ENCODE measurements at regions of chr22 and their contacts with region 1.

Region 1: DNA sequence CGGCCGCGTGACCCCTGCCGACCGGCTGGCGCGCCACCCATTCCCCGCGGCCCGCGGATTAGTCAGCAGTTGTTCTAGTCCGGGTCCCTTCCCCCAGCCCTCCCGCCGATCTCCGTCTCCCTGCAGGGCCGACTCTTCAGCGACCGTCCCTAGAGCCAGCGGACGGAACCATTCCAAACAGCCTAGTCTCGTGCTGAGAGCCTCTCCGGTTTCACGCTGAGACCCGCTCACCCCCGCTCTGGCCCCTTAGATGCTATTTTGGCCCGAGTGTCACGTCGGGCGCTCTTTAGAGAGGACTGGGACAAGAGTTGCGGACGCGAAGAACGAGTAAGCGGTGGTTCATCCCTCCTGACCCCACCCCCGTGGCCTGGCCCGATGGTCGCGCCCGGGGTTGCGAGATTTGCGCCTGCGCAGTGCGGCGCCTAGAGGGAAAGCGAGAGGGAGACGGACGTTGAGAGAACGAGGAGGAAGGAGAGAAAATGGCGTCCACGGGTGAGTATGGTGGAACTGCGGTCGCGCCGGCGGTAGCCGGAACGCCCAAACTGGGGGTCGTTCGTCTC is at the starts of genes EWSR1 and RHBDD3:
- DNase-seq: peak; percentile 85 to 96 (median 95)
- H3K4me3 ChIP-seq: peak within 1 kb of the TSS; percentile 65 to 100 (median 95)
- H3K27ac ChIP-seq: peak within 1 kb of the TSS; percentile 85 to 100 (median 99)
- H3K27me3 ChIP-seq: no peaks in the 10 kb centered on the region
- CTCF ChIP-seq: peak in 16 of 56 donors; percentile 3 to 41 (median 16)
- total RNA-seq, gene EWSR1: 167 to 257 (median 211) TPM
- total RNA-seq, gene RHBDD3: 20.6 to 54.7 (median 29.2) TPM

Region 2: GRCh38 chr22:27919222-27919941 is 1348.6 kb before region 1 on chr22 and contains the start of gene PITPNB:
- intact Hi-C with region 1: loop called in 1 of 2 experiments (anchors 10 kb)
- DNase-seq: peak; percentile 84 to 96 (median 93)
- H3K4me3 ChIP-seq: peak within 1 kb of the TSS; percentile 63 to 100 (median 93)
- H3K27ac ChIP-seq: peak within 1 kb of the TSS; percentile 49 to 96 (median 90)
- H3K27me3 ChIP-seq: no peaks in the 10 kb centered on the region
- CTCF ChIP-seq: peak in 16 of 56 donors; percentile 9 to 47 (median 20)
- total RNA-seq, gene PITPNB: 55.3 to 116 (median 83.1) TPM

Region 3: GRCh38 chr22:29306175-29306834 is 38.4 kb after region 1 on chr22 and contains the start of gene GAS2L1:
- intact Hi-C with region 1: loop called (anchors 5 kb)
- DNase-seq: peak in 9 of 10 donors; percentile 62 to 89 (median 81)
- H3K4me3 ChIP-seq: peak within 1 kb of the TSS; percentile 56 to 93 (median 82)
- H3K27ac ChIP-seq: peak within 1 kb of the TSS; percentile 15 to 96 (median 86)
- H3K27me3 ChIP-seq: no peaks in the 10 kb centered on the region
- CTCF ChIP-seq: peak; percentile 31 to 81 (median 68)
- total RNA-seq, gene GAS2L1: 33.5 to 139 (median 57.6) TPM

Region 4: DNA sequence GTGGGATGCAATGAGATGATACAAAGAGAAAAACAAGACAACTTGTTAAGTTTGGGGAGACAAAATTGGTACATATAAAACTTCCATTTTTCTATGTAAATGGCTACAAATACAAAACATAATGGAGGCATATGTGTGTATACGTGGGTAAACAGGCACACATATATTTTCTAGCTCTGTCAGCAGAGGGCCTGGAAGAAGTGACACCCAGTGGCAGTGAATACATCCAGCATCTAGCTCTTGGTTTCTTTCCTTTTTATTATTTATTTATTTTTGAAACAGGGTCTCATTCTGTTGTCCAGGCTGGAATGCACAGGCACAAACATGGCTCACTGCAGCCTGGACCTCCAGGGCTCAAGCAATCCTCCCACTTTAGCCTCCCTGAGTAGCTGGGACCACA is 52.6 kb after region 1 on chr22:
- intact Hi-C with region 1: no loop called
- DNase-seq: no peak
- H3K4me3 ChIP-seq: no peak overlapping the region
- H3K27ac ChIP-seq: peak overlapping the region in 21 of 59 donors; percentile 7 to 57 (median 30)
- H3K27me3 ChIP-seq: peaks cover 0 to 1% (median 0%) of the 10 kb centered on the region in 45 donors
- CTCF ChIP-seq: peak in 27 of 56 donors; percentile 9 to 40 (median 23)

Region 5: GRCh38 chr22:29553351-29554224 is 285.6 kb after region 1 on chr22 and contains the start of gene THOC5:
- intact Hi-C with region 1: loop called in 1 of 2 experiments (anchors 10 kb)
- DNase-seq: peak; percentile 88 to 98 (median 96)
- H3K4me3 ChIP-seq: peak within 1 kb of the TSS; percentile 68 to 95 (median 86)
- H3K27ac ChIP-seq: peak within 1 kb of the TSS; percentile 42 to 98 (median 92)
- H3K27me3 ChIP-seq: no peaks in the 10 kb centered on the region
- CTCF ChIP-seq: peak; percentile 61 to 94 (median 87)
- total RNA-seq, gene THOC5: 37.2 to 74.1 (median 51.8) TPM

Region 6: GRCh38 chr22:30423982-30424963 is 1156.3 kb after region 1 on chr22:
- intact Hi-C with region 1: loop called in 1 of 2 experiments (anchors 10 kb)
- DNase-seq: peak; percentile 97 to 99 (median 98)
- H3K4me3 ChIP-seq: peak overlapping the region; percentile 32 to 91 (median 78)
- H3K27ac ChIP-seq: peak overlapping the region; percentile 87 to 100 (median 98)
- H3K27me3 ChIP-seq: no peaks in the 10 kb centered on the region
- CTCF ChIP-seq: peak in 26 of 56 donors; percentile 1 to 57 (median 18)